SK-N-SH (cell line): ENCODE measurements at regions of chrX and their contacts with region 1.

Region 1: DNA sequence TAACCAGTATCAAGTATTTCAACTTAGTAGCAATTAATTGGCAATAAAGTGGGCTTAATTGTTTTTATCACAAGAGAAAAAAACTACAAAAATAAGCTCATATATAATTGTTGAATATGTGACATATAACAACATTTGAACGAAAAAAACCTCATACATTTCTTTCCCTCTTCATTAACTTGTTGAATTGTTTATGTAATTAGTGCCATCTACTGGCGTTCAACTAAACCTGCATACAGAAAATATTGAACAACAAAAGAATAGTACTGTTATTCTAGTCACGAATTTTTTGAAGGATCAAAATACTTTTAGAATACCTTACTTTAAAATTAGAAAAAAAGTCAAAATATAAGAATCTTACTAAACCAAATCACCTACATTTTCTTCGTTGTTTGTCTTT is 586.5 kb upstream of the FTHL17 start:
- DNase-seq: peak; percentile 6
- H3K4me3 ChIP-seq: no peak overlapping the region
- H3K27ac ChIP-seq: no peak overlapping the region
- H3K4me1 ChIP-seq: no peaks in the 10 kb centered on the region
- H3K27me3 ChIP-seq: no peaks in the 10 kb centered on the region
- CTCF ChIP-seq: peak; percentile 83
- EP300 ChIP-seq: no peak
- RAD21 ChIP-seq: peak; percentile 76

Region 2: DNA sequence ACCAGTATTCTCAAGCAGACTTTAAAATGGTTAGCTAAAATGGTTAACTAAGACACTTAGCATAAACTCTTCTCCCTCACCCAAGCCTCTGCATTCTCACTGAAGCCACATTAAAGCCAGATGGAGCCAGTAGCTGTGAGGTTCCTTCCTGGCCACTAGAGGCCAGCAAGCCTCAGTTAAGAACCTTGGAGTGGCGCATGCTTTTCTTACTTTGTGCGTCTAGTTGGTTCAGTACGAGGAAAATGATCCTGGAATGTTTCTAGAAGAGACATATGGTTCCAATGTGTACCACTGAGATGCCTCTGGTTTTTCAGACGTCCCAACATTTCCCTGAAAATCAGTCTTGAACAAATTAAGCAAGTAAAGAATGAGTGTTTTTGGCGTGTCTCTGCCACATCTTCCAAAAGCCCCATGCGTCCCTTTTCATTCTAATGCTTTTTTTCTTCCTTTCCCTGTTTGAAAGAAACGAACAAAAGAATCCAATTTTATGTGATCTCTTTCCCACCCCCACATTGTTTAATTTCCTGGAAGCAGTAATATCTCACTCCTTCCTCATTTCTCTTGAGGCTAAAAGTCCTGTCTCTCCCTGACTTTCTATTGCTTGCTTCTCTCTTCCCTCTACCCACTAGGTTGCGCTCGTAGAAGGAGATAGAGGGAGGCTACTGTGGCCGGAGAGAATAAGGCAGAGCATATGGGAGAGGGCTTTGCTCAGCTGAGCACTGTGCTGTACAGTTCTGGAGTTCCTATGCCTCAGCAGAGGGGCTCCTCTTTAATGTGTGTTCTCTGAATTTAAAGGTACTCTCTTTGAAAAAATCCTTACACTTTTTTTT is 686.4 kb before region 1 on chrX:
- CTCF ChIA-PET with region 1: interaction called, 13 read pairs
- POLR2A ChIA-PET with region 1: no interaction called
- DNase-seq: peak; percentile 60
- H3K4me3 ChIP-seq: no peak overlapping the region; a peak in 1 of 4 replicates
- H3K27ac ChIP-seq: no peak overlapping the region; a peak in 1 of 4 replicates
- H3K4me1 ChIP-seq: no peaks in the 10 kb centered on the region
- H3K27me3 ChIP-seq: no peaks in the 10 kb centered on the region; the same call in 1 of the 2 replicates
- CTCF ChIP-seq: peak; percentile 80
- EP300 ChIP-seq: no peak
- RAD21 ChIP-seq: peak; percentile 69

Region 3: DNA sequence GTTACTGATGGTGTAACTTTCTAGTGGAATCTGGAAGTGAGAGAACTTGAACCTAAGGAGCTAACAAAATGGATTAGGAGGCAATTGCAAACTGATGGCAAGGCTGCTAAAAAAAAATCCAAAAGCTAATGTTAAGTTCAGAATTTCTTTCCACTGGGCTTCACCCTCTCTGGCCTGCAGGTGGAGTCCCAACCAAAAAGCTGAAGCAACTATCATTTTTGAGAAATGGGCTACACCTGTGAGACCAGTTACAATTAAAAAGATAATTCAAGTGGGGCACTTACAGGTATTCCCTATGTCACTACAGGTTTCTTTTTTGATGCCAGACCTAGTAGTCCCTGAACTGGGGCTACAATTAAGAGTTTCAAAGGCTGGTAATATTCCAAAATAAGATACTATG is 444.4 kb before region 1 on chrX:
- CTCF ChIA-PET with region 1: interaction called, 12 read pairs
- POLR2A ChIA-PET with region 1: no interaction called
- DNase-seq: peak; percentile 22
- H3K4me3 ChIP-seq: no peak overlapping the region
- H3K27ac ChIP-seq: no peak overlapping the region
- H3K4me1 ChIP-seq: no peaks in the 10 kb centered on the region
- H3K27me3 ChIP-seq: no peaks in the 10 kb centered on the region
- CTCF ChIP-seq: peak; percentile 62
- EP300 ChIP-seq: no peak
- RAD21 ChIP-seq: peak; percentile 67